Endothelial cell of umbilical vein (primary cell): ENCODE measurements at regions of chr2 and their contacts with region 1.

Region 1: DNA sequence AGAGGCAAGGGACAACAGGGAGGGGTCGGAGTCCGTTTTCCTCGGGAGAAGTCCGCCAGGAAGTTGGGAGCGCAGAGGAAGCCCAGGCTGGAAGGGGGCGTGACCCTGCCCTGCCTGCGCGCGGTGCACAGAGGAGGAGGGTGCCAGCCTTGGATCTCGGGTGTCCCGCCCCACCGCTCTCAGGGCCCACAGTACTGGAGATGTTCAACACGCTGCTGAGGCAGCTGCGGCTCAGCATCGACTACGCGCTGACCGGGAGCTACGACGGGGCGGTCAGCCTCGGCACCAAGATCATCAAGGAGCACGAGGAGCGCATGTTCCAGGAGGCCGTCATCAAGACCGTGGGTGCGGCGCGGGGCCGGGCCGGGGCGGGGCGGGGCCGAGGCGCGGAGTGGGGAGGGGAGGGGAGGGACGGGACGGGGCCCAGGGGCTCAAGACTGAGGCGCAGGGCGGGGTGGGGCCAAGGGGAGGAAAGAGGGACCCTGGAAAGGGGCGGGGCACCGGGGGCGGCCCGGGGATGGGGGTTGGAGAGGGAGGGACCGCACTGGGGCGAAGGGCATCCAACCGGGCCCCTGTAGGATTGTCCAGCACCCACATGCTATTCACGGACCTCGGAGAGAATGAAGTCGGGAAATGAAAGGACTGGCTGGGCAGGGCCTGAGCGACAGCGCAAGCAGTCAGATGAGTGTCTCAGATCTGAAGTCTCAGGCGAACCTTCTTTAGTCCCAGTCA is 36.6 kb downstream of the POMC start:
- DNase-seq: no peak
- H3K4me3 ChIP-seq: no peak overlapping the region
- H3K27ac ChIP-seq: no peak overlapping the region
- H3K4me1 ChIP-seq: peaks cover 4% of the 10 kb centered on the region
- H3K27me3 ChIP-seq: peaks cover 7 to 24% of the 10 kb centered on the region in 2 experiments
- CTCF ChIP-seq: no peak
- POLR2A ChIP-seq: no peak

Region 2: DNA sequence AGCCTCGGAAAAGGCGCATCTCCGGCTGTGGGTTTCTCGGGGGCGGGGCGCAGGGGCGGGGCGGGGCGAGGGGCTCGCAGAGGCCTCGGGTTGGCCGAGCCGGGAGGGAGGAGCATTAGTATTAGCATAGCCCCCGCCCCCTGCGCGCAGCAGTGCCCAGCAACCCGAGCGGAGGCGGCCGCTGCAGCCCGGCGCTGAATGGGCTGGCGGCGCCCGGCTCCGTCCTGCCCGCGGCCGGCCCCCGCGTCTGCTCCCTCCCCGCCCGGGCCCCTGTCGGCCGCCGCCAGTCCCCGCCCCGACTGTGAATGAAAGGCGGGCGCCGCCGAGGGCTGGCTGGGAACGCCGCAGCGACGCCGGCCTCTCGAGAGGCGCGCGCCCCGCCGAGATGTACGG is 89.8 kb before region 1 on chr2 and contains the start of gene EFR3B:
- CTCF ChIA-PET with region 1: interaction called, 14 read pairs
- POLR2A ChIA-PET with region 1: no interaction called
- dilution Hi-C with region 1: no loop called
- intact Hi-C with region 1: loop called (anchors 1 kb)
- DNase-seq: peak; percentile 94
- H3K4me3 ChIP-seq: peak within 1 kb of the TSS; percentile 44 to 75 (median 67)
- H3K27ac ChIP-seq: no peak within 1 kb of the TSS
- H3K4me1 ChIP-seq: peaks cover 21% of the 10 kb centered on the region
- H3K27me3 ChIP-seq: peaks cover 2 to 11% of the 10 kb centered on the region in 2 experiments
- CTCF ChIP-seq: no peak
- POLR2A ChIP-seq: no peak
- total RNA-seq, gene EFR3B: 0.58 and 0.77 TPM in 2 replicates

Region 3: GRCh38 chr2:25078171-25079049 is 53.3 kb before region 1 on chr2:
- CTCF ChIA-PET with region 1: interaction called, 10 read pairs
- POLR2A ChIA-PET with region 1: no interaction called
- dilution Hi-C with region 1: no loop called
- intact Hi-C with region 1: no loop called
- DNase-seq: peak; percentile 88
- H3K4me3 ChIP-seq: no peak overlapping the region
- H3K27ac ChIP-seq: no peak overlapping the region
- H3K4me1 ChIP-seq: peaks cover 12% of the 10 kb centered on the region
- H3K27me3 ChIP-seq: peaks cover 2 to 9% of the 10 kb centered on the region in 2 experiments
- CTCF ChIP-seq: no peak
- POLR2A ChIP-seq: peak; percentile 19

Region 4: GRCh38 chr2:25104736-25105135 is 27.0 kb before region 1 on chr2:
- CTCF ChIA-PET with region 1: interaction called, 14 read pairs
- POLR2A ChIA-PET with region 1: no interaction called
- dilution Hi-C with region 1: no loop called
- intact Hi-C with region 1: no loop called
- DNase-seq: no peak
- H3K4me3 ChIP-seq: no peak overlapping the region
- H3K27ac ChIP-seq: no peak overlapping the region
- H3K4me1 ChIP-seq: no peaks in the 10 kb centered on the region
- H3K27me3 ChIP-seq: peaks cover 0 to 7% of the 10 kb centered on the region in 2 experiments
- CTCF ChIP-seq: no peak
- POLR2A ChIP-seq: no peak

Region 5: DNA sequence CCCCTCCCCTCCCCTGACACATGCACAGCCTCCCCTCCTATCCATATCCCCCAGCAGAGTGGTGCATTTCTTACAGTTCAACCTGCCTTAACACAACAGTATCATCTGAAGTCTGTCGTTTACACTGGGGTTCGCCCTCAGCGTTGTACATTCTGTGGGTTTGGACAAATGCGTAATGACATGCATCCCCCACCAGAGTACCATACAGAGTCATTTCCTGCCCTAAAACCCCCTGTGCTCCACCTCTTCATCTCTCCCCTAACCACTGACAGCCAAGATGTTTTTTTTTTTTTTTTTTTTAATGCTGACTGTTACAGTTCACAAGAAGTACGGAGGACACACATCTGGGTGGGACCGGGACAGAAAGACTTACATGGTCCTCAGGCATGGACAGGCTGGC is 14.1 kb after region 1 on chr2:
- CTCF ChIA-PET with region 1: interaction called, 11 read pairs
- POLR2A ChIA-PET with region 1: no interaction called
- dilution Hi-C with region 1: no loop called
- intact Hi-C with region 1: no loop called
- DNase-seq: no peak
- H3K4me3 ChIP-seq: no peak overlapping the region
- H3K27ac ChIP-seq: no peak overlapping the region
- H3K4me1 ChIP-seq: no peaks in the 10 kb centered on the region
- H3K27me3 ChIP-seq: no peaks in the 10 kb centered on the region
- CTCF ChIP-seq: no peak
- POLR2A ChIP-seq: no peak